CD4-positive, alpha-beta memory T cell (primary cell): ENCODE measurements at regions of chr11 and their contacts with region 1.

Region 1: GRCh38 chr11:65540297-65541092 is 15.6 kb downstream of the SCYL1 start:
- DNase-seq: peak; percentile 90 to 95 (median 91)
- H3K4me3 ChIP-seq: peak overlapping the region; percentile 73 to 91
- H3K4me3 Mint-ChIP-seq: peak overlapping the region; percentile 82 to 90 (median 87)
- H3K27ac ChIP-seq: peak overlapping the region; percentile 55
- H3K27ac Mint-ChIP-seq: peak overlapping the region; percentile 81 to 95 (median 87)
- H3K4me1 ChIP-seq: peaks cover 17% of the 10 kb centered on the region
- H3K4me1 Mint-ChIP-seq: peaks cover 12 to 36% (median 16%) of the 10 kb centered on the region in 4 donors
- H3K27me3 ChIP-seq: no peaks in the 10 kb centered on the region
- H3K27me3 Mint-ChIP-seq: no peaks in the 10 kb centered on the region

Region 2: DNA sequence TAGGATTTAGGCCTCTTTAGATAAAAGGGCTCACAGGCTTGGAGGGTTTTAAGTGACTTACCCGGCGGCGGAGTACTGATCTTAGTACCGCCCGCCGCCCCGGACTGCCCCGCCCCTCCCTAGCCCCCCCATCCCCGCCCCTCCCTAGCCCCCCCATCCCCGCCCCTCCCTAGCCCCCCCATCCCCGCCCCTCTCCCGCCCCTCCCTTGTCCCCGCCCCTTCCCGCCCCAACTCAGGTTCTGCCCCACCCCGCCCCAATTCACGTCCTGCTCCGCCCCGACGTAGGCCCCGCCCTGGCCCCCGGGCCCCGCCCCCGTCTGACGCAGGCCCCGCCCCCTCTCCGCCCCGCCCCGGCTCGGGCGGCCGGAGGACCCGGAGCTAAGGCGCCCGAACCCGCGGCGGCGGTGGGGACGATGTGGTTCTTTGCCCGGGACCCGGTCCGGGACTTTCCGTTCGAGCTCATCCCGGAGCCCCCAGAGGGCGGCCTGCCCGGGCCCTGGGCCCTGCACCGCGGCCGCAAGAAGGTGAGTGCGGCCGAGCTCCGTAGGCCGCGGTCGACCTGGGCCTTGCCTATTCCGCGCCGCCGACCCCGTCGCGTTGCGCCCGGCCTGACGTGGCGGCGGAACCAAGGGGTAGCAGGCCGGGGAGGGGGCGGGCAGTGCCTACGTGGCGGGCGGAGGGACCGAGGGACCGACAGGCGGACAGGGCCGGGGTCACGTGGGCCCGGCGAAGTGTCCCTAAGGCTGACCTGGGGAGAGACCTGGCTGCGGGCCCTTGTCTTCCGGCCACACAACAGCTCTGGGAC is 15.6 kb before region 1 on chr11 and contains the start of gene SCYL1:
- CTCF ChIA-PET with region 1: interaction called, 19 read pairs
- POLR2A ChIA-PET with region 1: interaction called, 77 read pairs
- intact Hi-C with region 1: loop called (anchors 1 kb)
- DNase-seq: peak; percentile 72 to 82 (median 75)
- H3K4me3 ChIP-seq: peak within 1 kb of the TSS; percentile 78 to 83
- H3K4me3 Mint-ChIP-seq: peak within 1 kb of the TSS; percentile 81 to 92 (median 88)
- H3K27ac ChIP-seq: peak within 1 kb of the TSS; percentile 84
- H3K27ac Mint-ChIP-seq: peak within 1 kb of the TSS; percentile 81 to 98 (median 94)
- H3K4me1 ChIP-seq: peaks cover 54% of the 10 kb centered on the region
- H3K4me1 Mint-ChIP-seq: peaks cover 35 to 63% (median 49%) of the 10 kb centered on the region in 4 donors
- H3K27me3 ChIP-seq: no peaks in the 10 kb centered on the region
- H3K27me3 Mint-ChIP-seq: no peaks in the 10 kb centered on the region
- total RNA-seq, gene SCYL1: 72.5 to 81.3 TPM

Region 3: DNA sequence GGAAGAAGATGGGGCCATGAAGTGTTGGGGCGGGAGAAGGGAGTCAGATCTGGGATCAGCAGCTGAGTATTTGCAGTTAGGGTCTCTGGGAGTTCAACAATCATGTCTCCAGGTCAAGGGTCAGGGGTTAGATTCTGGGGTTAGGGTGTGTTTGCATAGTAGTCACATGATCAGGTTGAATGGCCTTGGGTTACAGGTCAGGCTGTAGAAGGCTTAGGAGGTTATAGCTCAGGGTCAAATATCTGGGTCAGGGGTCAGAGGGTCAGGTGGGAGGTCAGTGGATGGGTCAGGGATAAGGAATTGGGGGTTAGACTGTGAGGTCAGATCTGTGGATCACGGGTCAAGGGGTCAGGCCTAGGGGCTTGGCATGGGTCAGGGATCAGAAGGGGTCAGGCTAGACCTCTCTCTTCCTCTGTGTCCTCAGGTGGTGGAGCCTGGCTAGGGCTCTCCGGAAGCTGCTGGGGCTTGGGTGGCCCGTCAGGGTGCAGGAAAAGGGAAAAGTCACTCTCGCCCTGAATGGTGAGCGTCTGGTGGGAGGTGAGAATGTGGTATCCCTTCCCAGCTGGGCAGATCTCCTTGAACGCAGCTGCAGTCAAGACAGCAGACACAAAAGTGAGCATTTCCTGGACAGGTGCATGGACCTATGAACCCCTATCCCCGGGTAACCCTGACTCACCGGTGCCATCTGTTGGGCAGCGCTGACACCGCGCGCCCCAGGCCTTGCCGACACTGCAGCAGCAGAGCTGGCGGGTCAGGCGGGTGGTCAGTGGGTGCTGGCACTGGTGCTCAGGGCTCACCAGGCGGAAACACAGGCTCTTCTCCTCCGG is 11.3 kb after region 1 on chr11:
- CTCF ChIA-PET with region 1: interaction called, 71 read pairs
- POLR2A ChIA-PET with region 1: interaction called, 65 read pairs
- intact Hi-C with region 1: loop called (anchors 1 kb)
- DNase-seq: peak; percentile 56 to 65 (median 61)
- H3K4me3 ChIP-seq: no peak overlapping the region
- H3K4me3 Mint-ChIP-seq: peak overlapping the region in 7 of 8 donors; percentile 17 to 65 (median 50)
- H3K27ac ChIP-seq: no peak overlapping the region
- H3K27ac Mint-ChIP-seq: peak overlapping the region; percentile 77 to 92 (median 89)
- H3K4me1 ChIP-seq: peaks cover 77% of the 10 kb centered on the region
- H3K4me1 Mint-ChIP-seq: peaks cover 47 to 84% (median 66%) of the 10 kb centered on the region in 4 donors
- H3K27me3 ChIP-seq: no peaks in the 10 kb centered on the region
- H3K27me3 Mint-ChIP-seq: no peaks in the 10 kb centered on the region

Region 4: GRCh38 chr11:65575568-65576231 is 35.2 kb after region 1 on chr11 and contains the start of gene EHBP1L1:
- CTCF ChIA-PET with region 1: interaction called, 66 read pairs
- POLR2A ChIA-PET with region 1: interaction called, 181 read pairs
- intact Hi-C with region 1: loop called (anchors 1 kb)
- DNase-seq: peak; percentile 71 to 87 (median 81)
- H3K4me3 ChIP-seq: peak within 1 kb of the TSS; percentile 88 to 89
- H3K4me3 Mint-ChIP-seq: peak within 1 kb of the TSS; percentile 93 to 99 (median 96)
- H3K27ac ChIP-seq: peak within 1 kb of the TSS; percentile 99
- H3K27ac Mint-ChIP-seq: peak within 1 kb of the TSS; percentile 97 to 99 (median 98)
- H3K4me1 ChIP-seq: peaks cover 66% of the 10 kb centered on the region
- H3K4me1 Mint-ChIP-seq: peaks cover 25 to 76% (median 52%) of the 10 kb centered on the region in 4 donors
- H3K27me3 ChIP-seq: no peaks in the 10 kb centered on the region
- H3K27me3 Mint-ChIP-seq: no peaks in the 10 kb centered on the region
- total RNA-seq, gene EHBP1L1: 151 to 154 TPM

Region 5: GRCh38 chr11:65593518-65594298 is 53.2 kb after region 1 on chr11:
- CTCF ChIA-PET with region 1: interaction called, 124 read pairs
- POLR2A ChIA-PET with region 1: interaction called, 110 read pairs
- intact Hi-C with region 1: loop called (anchors 1 kb)
- DNase-seq: peak in 4 of 5 donors; percentile 26 to 34 (median 28)
- H3K4me3 ChIP-seq: no peak overlapping the region
- H3K4me3 Mint-ChIP-seq: no peak overlapping the region
- H3K27ac ChIP-seq: no peak overlapping the region
- H3K27ac Mint-ChIP-seq: peak overlapping the region in 2 of 7 donors; percentile 10 to 42
- H3K4me1 ChIP-seq: peaks cover 30% of the 10 kb centered on the region
- H3K4me1 Mint-ChIP-seq: peaks cover 7 to 36% (median 12%) of the 10 kb centered on the region in 4 donors
- H3K27me3 ChIP-seq: no peaks in the 10 kb centered on the region
- H3K27me3 Mint-ChIP-seq: no peaks in the 10 kb centered on the region